Naive thymus-derived CD4-positive, alpha-beta T cell (primary cell): ENCODE measurements at regions of chr3 and their contacts with region 1.

Region 1: GRCh38 chr3:125437631-125438435 is 62.7 kb upstream of the ZNF148 start:
- DNase-seq: peak; percentile 26 to 68 (median 53)
- ATAC-seq: peak; percentile 78
- H3K4me3 ChIP-seq: no peak overlapping the region
- H3K4me3 Mint-ChIP-seq: no peak overlapping the region
- H3K27ac ChIP-seq: no peak overlapping the region
- H3K27ac Mint-ChIP-seq: no peak overlapping the region
- H3K4me1 ChIP-seq: no peaks in the 10 kb centered on the region
- H3K4me1 Mint-ChIP-seq: peaks cover 0 to 4% (median 0%) of the 10 kb centered on the region in 7 donors
- H3K27me3 ChIP-seq: no peaks in the 10 kb centered on the region
- H3K27me3 Mint-ChIP-seq: peaks cover 0 to 3% (median 0%) of the 10 kb centered on the region in 5 donors

Region 2: DNA sequence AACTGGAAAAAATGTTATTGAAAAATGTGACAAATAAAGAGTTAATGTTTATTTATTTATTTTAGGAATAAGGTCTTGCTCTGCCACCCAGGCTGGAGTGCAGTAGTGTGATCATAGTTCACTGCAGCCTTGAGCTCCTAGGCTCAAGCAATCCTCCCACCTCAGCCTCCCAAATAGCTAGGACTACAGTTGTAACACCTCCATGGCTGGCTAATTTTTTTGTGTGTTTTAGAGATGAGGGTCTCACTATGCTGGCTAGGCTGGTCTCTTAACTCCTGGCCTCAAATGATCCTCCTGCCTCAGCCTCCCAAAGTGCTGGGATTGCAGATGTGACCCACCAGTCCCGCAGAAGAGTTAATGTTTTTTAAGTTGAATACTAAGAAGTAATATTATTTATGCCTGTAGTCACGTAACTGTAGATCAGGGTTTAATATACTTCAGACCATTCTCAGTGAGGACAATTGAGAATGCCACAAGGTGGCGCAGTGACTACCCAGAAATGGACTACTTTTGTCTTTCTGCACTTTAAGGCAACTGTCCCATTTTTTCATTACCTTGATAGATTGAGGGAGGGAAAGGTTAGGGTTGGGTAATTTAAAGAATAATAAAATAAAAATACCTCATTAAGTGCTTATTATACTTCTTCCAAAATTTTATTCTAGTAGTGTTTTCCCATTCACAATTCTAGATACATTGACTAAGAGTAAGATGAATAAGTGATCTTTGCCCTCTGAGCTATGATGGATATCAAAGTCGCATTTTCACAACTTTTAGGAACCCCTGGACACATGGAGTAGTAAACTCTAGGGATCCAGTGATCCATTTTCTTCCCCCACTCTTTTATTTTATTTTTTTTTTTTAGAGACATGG is 509.3 kb before region 1 on chr3:
- CTCF ChIA-PET with region 1: interaction called, 6 read pairs
- POLR2A ChIA-PET with region 1: no interaction called
- intact Hi-C with region 1: loop called (anchors 1 kb)
- DNase-seq: peak; percentile 19 to 61 (median 37)
- ATAC-seq: peak; percentile 79
- H3K4me3 ChIP-seq: no peak overlapping the region
- H3K4me3 Mint-ChIP-seq: no peak overlapping the region
- H3K27ac ChIP-seq: no peak overlapping the region
- H3K27ac Mint-ChIP-seq: peak overlapping the region in 2 of 9 donors; percentile 18 to 49
- H3K4me1 ChIP-seq: no peaks in the 10 kb centered on the region
- H3K4me1 Mint-ChIP-seq: peaks cover 0 to 8% (median 0%) of the 10 kb centered on the region in 7 donors
- H3K27me3 ChIP-seq: no peaks in the 10 kb centered on the region
- H3K27me3 Mint-ChIP-seq: peaks cover 0 to 57% (median 11%) of the 10 kb centered on the region in 5 donors

Region 3: DNA sequence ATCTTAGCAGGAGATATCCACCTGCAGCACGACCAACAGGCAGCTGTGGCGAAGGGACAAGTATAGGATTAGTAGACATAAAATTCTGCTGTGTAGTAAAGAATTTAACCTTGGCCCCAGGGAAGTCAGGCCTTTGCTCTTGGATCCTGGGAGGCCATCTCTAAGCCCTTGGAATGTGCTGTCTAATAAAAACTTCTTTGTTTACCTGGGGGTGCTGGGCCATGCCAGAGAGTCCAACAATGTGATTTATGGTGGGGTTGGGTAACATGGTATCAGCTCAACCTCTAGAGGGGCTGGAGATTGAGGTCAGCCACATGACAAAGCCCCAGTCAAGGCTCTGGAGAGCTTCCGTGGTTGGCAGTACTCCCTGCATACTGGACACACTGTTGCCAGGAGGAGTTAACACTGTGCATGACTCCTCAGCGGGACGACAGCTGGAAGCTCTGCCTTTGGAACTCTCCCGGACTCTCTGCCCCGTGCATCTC is 434.4 kb before region 1 on chr3:
- CTCF ChIA-PET with region 1: interaction called, 12 read pairs
- POLR2A ChIA-PET with region 1: no interaction called
- intact Hi-C with region 1: no loop called
- DNase-seq: no peak
- ATAC-seq: no peak
- H3K4me3 ChIP-seq: no peak overlapping the region
- H3K4me3 Mint-ChIP-seq: peak overlapping the region in 5 of 10 donors; percentile 17 to 77 (median 43)
- H3K27ac ChIP-seq: peak overlapping the region; percentile 81
- H3K27ac Mint-ChIP-seq: peak overlapping the region in 8 of 9 donors; percentile 92 to 99 (median 96)
- H3K4me1 ChIP-seq: peaks cover 0 to 28% of the 10 kb centered on the region in 2 donors
- H3K4me1 Mint-ChIP-seq: peaks cover 9 to 68% (median 39%) of the 10 kb centered on the region in 7 donors
- H3K27me3 ChIP-seq: no peaks in the 10 kb centered on the region
- H3K27me3 Mint-ChIP-seq: no peaks in the 10 kb centered on the region

Region 4: DNA sequence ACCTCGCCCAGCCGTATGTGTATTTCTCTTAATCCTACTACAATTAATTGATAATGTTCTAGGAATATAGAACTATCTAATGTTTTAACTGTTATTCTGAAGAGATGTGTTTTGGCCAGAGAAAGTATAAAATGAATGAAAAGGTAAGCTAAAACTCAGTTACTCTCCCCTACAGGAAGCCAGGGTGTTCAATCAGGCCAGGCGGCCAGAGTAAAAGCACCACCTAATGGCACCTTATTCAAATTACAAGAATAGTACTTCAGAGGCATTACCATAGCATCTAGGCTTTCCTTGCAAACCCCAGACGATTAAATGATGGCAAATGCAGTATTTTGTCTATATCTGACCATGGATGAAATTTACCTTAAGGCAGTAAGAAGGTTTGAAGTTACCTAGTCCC is 235.6 kb before region 1 on chr3:
- CTCF ChIA-PET with region 1: no interaction called
- POLR2A ChIA-PET with region 1: no interaction called
- intact Hi-C with region 1: loop called in 1 of 2 experiments (anchors 10 kb)
- DNase-seq: peak in 3 of 9 donors; percentile 16 to 37 (median 27)
- ATAC-seq: peak; percentile 45
- H3K4me3 ChIP-seq: no peak overlapping the region
- H3K4me3 Mint-ChIP-seq: no peak overlapping the region
- H3K27ac ChIP-seq: no peak overlapping the region
- H3K27ac Mint-ChIP-seq: no peak overlapping the region
- H3K4me1 ChIP-seq: no peaks in the 10 kb centered on the region
- H3K4me1 Mint-ChIP-seq: peaks cover 0 to 8% (median 0%) of the 10 kb centered on the region in 7 donors
- H3K27me3 ChIP-seq: no peaks in the 10 kb centered on the region
- H3K27me3 Mint-ChIP-seq: peaks cover 0 to 22% (median 0%) of the 10 kb centered on the region in 5 donors

Region 5: GRCh38 chr3:125240496-125240895 is 197.3 kb before region 1 on chr3:
- CTCF ChIA-PET with region 1: no interaction called
- POLR2A ChIA-PET with region 1: no interaction called
- intact Hi-C with region 1: no loop called
- DNase-seq: no peak
- ATAC-seq: no peak
- H3K4me3 ChIP-seq: no peak overlapping the region
- H3K4me3 Mint-ChIP-seq: no peak overlapping the region
- H3K27ac ChIP-seq: no peak overlapping the region
- H3K27ac Mint-ChIP-seq: peak overlapping the region in 2 of 9 donors; percentile 21 to 43
- H3K4me1 ChIP-seq: no peaks in the 10 kb centered on the region
- H3K4me1 Mint-ChIP-seq: peaks cover 0 to 12% (median 8%) of the 10 kb centered on the region in 7 donors
- H3K27me3 ChIP-seq: no peaks in the 10 kb centered on the region
- H3K27me3 Mint-ChIP-seq: no peaks in the 10 kb centered on the region

Region 6: DNA sequence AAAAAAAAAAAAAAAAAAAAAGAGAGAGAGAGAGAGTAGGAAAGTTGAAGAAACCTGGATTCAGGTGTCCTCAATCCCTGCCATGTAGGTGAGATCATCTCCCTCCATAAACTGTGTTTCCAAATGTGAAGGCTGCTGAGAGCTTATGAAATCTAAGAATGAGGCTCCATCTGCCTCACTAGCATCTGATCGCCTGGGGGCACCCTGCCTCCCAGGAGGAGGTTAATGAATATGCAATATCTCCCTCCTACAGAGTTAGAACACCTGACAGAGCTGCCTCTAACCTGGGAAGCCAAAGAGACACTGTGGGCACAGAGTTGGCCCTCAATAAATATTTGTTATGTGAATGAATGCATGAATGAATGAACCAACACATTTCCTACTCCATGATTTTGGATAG is 38.9 kb before region 1 on chr3:
- CTCF ChIA-PET with region 1: no interaction called
- POLR2A ChIA-PET with region 1: no interaction called
- intact Hi-C with region 1: no loop called
- DNase-seq: no peak
- ATAC-seq: no peak
- H3K4me3 ChIP-seq: no peak overlapping the region
- H3K4me3 Mint-ChIP-seq: no peak overlapping the region
- H3K27ac ChIP-seq: no peak overlapping the region
- H3K27ac Mint-ChIP-seq: no peak overlapping the region
- H3K4me1 ChIP-seq: no peaks in the 10 kb centered on the region
- H3K4me1 Mint-ChIP-seq: peaks cover 0 to 4% (median 0%) of the 10 kb centered on the region in 7 donors
- H3K27me3 ChIP-seq: peaks cover 0 to 3% of the 10 kb centered on the region in 2 donors
- H3K27me3 Mint-ChIP-seq: peaks cover 6 to 58% (median 11%) of the 10 kb centered on the region in 5 donors

Region 7: DNA sequence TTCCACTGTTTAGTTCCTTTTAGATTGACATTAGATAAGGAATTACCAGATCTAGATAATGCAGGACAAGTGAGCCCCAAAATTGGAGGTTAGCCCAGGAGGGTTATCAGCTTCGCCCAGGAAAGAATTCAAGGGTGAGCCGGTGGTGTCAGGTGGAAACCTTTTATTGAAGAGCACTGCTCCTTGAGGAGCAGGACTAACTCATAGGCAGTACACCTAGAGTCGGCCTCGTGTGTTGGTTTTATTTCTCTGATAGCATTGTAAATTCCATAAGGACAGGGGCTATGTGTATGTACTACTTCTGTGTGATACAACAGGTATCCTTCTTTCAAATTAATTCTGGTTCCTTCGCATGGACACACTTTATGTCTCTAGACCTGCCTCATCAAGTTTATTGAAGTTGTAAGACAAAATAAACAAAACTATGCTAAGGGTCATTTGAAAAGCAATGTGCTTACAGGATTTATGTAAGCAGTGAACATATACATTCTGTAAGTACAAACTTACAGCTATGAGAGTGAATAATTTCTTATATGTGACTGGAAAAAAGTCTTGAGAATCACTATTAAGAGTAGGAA is 25.0 kb after region 1 on chr3:
- CTCF ChIA-PET with region 1: no interaction called
- POLR2A ChIA-PET with region 1: no interaction called
- intact Hi-C with region 1: no loop called
- DNase-seq: no peak
- ATAC-seq: no peak
- H3K4me3 ChIP-seq: no peak overlapping the region
- H3K4me3 Mint-ChIP-seq: no peak overlapping the region
- H3K27ac ChIP-seq: no peak overlapping the region
- H3K27ac Mint-ChIP-seq: no peak overlapping the region
- H3K4me1 ChIP-seq: no peaks in the 10 kb centered on the region
- H3K4me1 Mint-ChIP-seq: no peaks in the 10 kb centered on the region
- H3K27me3 ChIP-seq: no peaks in the 10 kb centered on the region
- H3K27me3 Mint-ChIP-seq: no peaks in the 10 kb centered on the region

Region 8: GRCh38 chr3:125692361-125692760 is 254.5 kb after region 1 on chr3:
- CTCF ChIA-PET with region 1: no interaction called
- POLR2A ChIA-PET with region 1: no interaction called
- intact Hi-C with region 1: no loop called
- DNase-seq: no peak
- ATAC-seq: no peak
- H3K4me3 ChIP-seq: no peak overlapping the region
- H3K4me3 Mint-ChIP-seq: no peak overlapping the region
- H3K27ac ChIP-seq: no peak overlapping the region
- H3K27ac Mint-ChIP-seq: no peak overlapping the region
- H3K4me1 ChIP-seq: no peaks in the 10 kb centered on the region
- H3K4me1 Mint-ChIP-seq: no peaks in the 10 kb centered on the region
- H3K27me3 ChIP-seq: no peaks in the 10 kb centered on the region
- H3K27me3 Mint-ChIP-seq: peaks cover 0 to 11% (median 7%) of the 10 kb centered on the region in 5 donors